ENCODE measurements at regions of chr17 and their contacts with region 1.

Region 1: GRCh38 chr17:57597531-57598453 is 147.3 kb downstream of the CCDC182 start:
- DNase-seq: peak in 2 of 5 donors; percentile 16 to 21
- H3K4me3 ChIP-seq: no peak overlapping the region
- H3K4me3 Mint-ChIP-seq: peak overlapping the region in 3 of 8 donors; percentile 44 to 65 (median 61)
- H3K27ac ChIP-seq: no peak overlapping the region
- H3K27ac Mint-ChIP-seq: peak overlapping the region; percentile 53 to 96 (median 88)
- H3K4me1 ChIP-seq: peaks cover 54% of the 10 kb centered on the region
- H3K4me1 Mint-ChIP-seq: peaks cover 44 to 62% (median 51%) of the 10 kb centered on the region in 4 donors
- H3K27me3 ChIP-seq: no peaks in the 10 kb centered on the region
- H3K27me3 Mint-ChIP-seq: no peaks in the 10 kb centered on the region

Region 2: GRCh38 chr17:57585341-57586195 is 12.2 kb before region 1 on chr17:
- CTCF ChIA-PET with region 1: interaction called, 13 read pairs
- POLR2A ChIA-PET with region 1: no interaction called
- intact Hi-C with region 1: no loop called
- DNase-seq: no peak
- H3K4me3 ChIP-seq: no peak overlapping the region
- H3K4me3 Mint-ChIP-seq: no peak overlapping the region
- H3K27ac ChIP-seq: no peak overlapping the region
- H3K27ac Mint-ChIP-seq: peak overlapping the region in 4 of 7 donors; percentile 5 to 62 (median 40)
- H3K4me1 ChIP-seq: no peaks in the 10 kb centered on the region
- H3K4me1 Mint-ChIP-seq: peaks cover 0 to 6% (median 3%) of the 10 kb centered on the region in 4 donors
- H3K27me3 ChIP-seq: no peaks in the 10 kb centered on the region
- H3K27me3 Mint-ChIP-seq: no peaks in the 10 kb centered on the region

Region 3: DNA sequence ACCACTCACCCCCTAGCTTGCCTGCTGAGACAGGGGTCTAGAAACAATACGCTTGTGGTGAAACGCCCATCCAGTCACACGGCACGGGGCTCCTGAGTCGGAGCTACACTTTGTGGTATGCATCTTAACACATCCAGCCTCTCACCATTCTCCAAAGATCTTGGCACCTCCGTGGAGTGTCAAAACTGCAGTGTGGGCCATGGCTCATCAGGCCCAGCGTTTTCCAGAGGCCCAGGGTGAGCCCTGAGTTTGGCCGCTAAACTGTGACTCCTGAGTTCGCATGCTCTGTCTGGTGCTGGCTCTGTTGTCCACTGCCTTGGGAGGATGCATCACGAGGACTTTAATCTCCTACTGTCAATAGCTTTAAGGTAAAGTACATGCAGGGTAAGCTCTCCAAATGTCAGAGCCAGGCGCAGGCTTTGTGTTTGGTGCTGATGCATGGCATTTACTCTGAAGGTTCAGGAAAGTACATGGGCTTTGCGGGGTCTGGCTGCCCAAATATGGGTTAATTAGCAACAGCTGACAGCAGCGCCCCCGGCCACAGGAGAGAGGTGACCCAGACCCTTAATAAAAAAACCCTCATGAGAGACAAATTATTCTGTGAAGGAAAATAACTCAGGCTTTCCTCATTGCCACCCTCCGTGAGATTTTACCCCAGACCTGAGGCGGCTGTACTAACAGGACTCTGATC is 28.9 kb after region 1 on chr17:
- CTCF ChIA-PET with region 1: interaction called, 11 read pairs
- POLR2A ChIA-PET with region 1: no interaction called
- intact Hi-C with region 1: no loop called
- DNase-seq: no peak
- H3K4me3 ChIP-seq: no peak overlapping the region
- H3K4me3 Mint-ChIP-seq: peak overlapping the region in 1 of 8 donors; percentile 21
- H3K27ac ChIP-seq: no peak overlapping the region
- H3K27ac Mint-ChIP-seq: peak overlapping the region in 2 of 7 donors; percentile 17 to 52
- H3K4me1 ChIP-seq: peaks cover 4% of the 10 kb centered on the region
- H3K4me1 Mint-ChIP-seq: peaks cover 3 to 18% (median 8%) of the 10 kb centered on the region in 4 donors
- H3K27me3 ChIP-seq: no peaks in the 10 kb centered on the region
- H3K27me3 Mint-ChIP-seq: no peaks in the 10 kb centered on the region

Region 4: DNA sequence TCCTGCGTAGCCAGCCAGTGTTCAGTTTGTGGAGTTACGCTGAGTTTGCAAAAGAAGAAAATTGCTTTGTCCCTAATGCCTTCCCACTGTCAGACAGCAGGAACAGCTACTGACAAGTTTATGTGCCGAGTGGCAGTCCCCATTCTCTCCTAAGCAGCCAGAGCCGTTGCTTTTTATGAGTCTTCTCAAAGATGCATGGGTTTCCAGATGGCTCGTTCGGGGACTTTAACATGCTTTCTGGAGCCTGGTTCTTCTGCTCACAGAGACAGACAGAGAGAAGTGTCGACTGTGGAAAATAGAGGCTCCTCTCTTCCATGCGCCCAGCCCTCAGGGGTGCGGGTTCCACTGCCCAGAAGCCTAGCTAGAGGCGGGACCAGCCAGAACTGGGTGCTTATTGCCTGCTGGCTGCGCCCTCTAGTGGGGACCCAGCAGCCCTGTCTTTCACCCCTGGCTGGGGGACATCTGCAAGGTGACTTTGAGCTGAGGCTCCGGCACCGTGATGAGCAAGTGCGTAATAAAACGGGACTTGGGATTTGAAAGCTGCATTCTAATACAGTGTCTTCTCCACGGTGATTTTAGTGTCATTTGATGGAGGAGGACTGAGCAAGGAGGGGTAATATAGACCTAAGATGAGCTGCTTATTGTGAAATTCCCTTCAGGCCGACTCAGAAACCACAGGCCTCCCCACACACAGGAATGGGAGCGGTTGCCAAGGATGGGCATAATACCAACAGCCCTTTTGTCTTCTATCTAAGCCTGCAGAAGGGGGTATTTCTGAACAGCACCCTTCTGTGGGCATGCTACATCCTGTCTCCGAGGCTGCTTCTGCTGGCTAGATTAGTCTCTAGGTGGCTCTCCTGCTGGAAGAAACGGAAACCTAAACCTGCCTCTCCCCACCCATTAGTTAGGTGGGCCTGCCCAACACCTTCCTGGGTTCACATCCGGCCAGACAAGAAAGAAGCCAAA is 74.2 kb after region 1 on chr17:
- CTCF ChIA-PET with region 1: interaction called, 217 read pairs
- POLR2A ChIA-PET with region 1: interaction called, 30 read pairs
- intact Hi-C with region 1: loop called (anchors 1 kb)
- DNase-seq: peak; percentile 62 to 68 (median 67)
- H3K4me3 ChIP-seq: no peak overlapping the region
- H3K4me3 Mint-ChIP-seq: peak overlapping the region in 6 of 8 donors; percentile 16 to 71 (median 52)
- H3K27ac ChIP-seq: peak overlapping the region; percentile 10
- H3K27ac Mint-ChIP-seq: peak overlapping the region; percentile 14 to 86 (median 77)
- H3K4me1 ChIP-seq: peaks cover 19% of the 10 kb centered on the region
- H3K4me1 Mint-ChIP-seq: peaks cover 7 to 37% (median 20%) of the 10 kb centered on the region in 4 donors
- H3K27me3 ChIP-seq: no peaks in the 10 kb centered on the region
- H3K27me3 Mint-ChIP-seq: no peaks in the 10 kb centered on the region

Region 5: GRCh38 chr17:57747221-57748017 is 149.6 kb after region 1 on chr17:
- CTCF ChIA-PET with region 1: interaction called, 22 read pairs
- POLR2A ChIA-PET with region 1: no interaction called
- intact Hi-C with region 1: loop called (anchors 1 kb)
- DNase-seq: peak; percentile 45 to 57 (median 49)
- H3K4me3 ChIP-seq: no peak overlapping the region
- H3K4me3 Mint-ChIP-seq: no peak overlapping the region
- H3K27ac ChIP-seq: no peak overlapping the region
- H3K27ac Mint-ChIP-seq: peak overlapping the region in 1 of 7 donors; percentile 37
- H3K4me1 ChIP-seq: no peaks in the 10 kb centered on the region
- H3K4me1 Mint-ChIP-seq: peaks cover 0 to 1% (median 0%) of the 10 kb centered on the region in 4 donors
- H3K27me3 ChIP-seq: no peaks in the 10 kb centered on the region
- H3K27me3 Mint-ChIP-seq: peaks cover 3 to 9% of the 10 kb centered on the region in 2 donors

Region 6: GRCh38 chr17:57833179-57833939 is 235.6 kb after region 1 on chr17:
- CTCF ChIA-PET with region 1: interaction called, 3 read pairs
- POLR2A ChIA-PET with region 1: no interaction called
- intact Hi-C with region 1: loop called (anchors 5 kb)
- DNase-seq: peak; percentile 58 to 65 (median 61)
- H3K4me3 ChIP-seq: no peak overlapping the region
- H3K4me3 Mint-ChIP-seq: no peak overlapping the region
- H3K27ac ChIP-seq: no peak overlapping the region
- H3K27ac Mint-ChIP-seq: no peak overlapping the region
- H3K4me1 ChIP-seq: peaks cover 10% of the 10 kb centered on the region
- H3K4me1 Mint-ChIP-seq: peaks cover 0 to 5% (median 0%) of the 10 kb centered on the region in 4 donors
- H3K27me3 ChIP-seq: no peaks in the 10 kb centered on the region
- H3K27me3 Mint-ChIP-seq: no peaks in the 10 kb centered on the region